ENCODE measurements at regions of chr5 and their contacts with region 1.

Region 1: GRCh38 chr5:150075871-150076288 is 10.5 kb downstream of the CSF1R start:
- DNase-seq: peak in 1 of 2 experiments; percentile 32
- H3K4me3 ChIP-seq: no peak overlapping the region
- H3K27ac ChIP-seq: no peak overlapping the region
- H3K4me1 ChIP-seq: no peaks in the 10 kb centered on the region
- H3K27me3 ChIP-seq: no peaks in the 10 kb centered on the region
- CTCF ChIP-seq: peak; percentile 7 to 33 (median 22); a peak in 3 of 4 replicates
- EP300 ChIP-seq: no peak
- POLR2A ChIP-seq: no peak
- RAD21 ChIP-seq: peak; percentile 14 to 35; a peak in 2 of 4 replicates

Region 2: DNA sequence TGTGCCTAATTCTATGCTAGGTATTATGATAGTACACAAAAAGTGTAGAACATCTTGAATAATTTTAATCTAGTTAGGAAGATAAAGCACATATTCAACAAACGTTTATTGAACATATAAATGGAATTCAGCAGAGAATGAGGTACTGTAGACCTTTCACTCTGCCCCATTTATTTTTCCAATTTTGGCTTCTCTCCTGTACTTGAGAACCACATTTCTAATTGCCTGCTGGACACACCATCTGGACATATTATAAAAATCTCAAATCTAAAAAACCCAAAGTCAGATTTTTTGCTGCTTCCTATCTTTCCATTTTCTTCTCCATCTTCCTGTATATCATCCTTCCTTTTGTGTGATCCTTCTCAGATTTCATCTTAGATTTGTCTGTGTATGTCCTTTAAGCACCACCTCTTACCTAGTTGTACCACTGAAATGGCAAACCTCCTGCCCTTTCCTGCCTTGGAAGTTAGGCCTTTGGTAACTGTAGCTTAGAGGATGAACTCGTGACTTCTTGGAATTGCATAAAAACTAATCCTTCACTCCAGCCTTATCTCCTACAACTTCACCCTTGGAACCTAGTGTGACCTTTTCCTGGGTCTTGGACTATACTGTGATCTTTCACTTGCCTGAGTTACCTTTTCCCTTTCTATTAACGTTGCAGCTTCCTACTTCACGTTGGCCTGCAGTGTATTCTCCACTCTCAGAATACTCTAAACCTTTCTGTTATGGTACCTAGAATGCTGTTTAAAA is 106.5 kb before region 1 on chr5:
- CTCF ChIA-PET with region 1: no interaction called
- POLR2A ChIA-PET with region 1: no interaction called
- DNase-seq: no peak
- H3K4me3 ChIP-seq: no peak overlapping the region
- H3K27ac ChIP-seq: no peak overlapping the region
- H3K4me1 ChIP-seq: no peaks in the 10 kb centered on the region
- H3K27me3 ChIP-seq: no peaks in the 10 kb centered on the region
- CTCF ChIP-seq: no peak
- EP300 ChIP-seq: no peak
- POLR2A ChIP-seq: no peak
- RAD21 ChIP-seq: no peak

Region 3: DNA sequence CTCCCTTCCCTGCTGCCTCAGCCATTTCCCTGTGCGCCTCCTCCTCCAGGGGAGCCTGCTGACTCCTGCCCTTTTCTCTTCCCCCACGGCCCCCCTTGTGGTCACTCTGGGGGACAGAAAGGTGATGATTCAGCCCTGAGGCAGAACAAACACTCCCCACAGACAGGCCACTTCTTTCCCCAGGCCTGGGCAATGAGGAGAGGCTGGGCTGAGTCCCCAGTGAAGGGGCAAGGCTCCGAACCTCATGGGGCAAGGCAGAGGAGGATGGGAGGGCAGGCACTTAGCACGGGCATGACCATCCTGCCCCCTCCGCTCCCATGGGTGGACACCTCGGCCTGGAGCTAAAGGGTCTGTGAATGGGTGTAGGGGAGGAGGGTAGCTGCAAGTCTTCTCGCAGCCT is 10.5 kb before region 1 on chr5:
- CTCF ChIA-PET with region 1: interaction called, 17 read pairs
- POLR2A ChIA-PET with region 1: interaction called, 4 read pairs
- DNase-seq: no peak
- H3K4me3 ChIP-seq: no peak overlapping the region
- H3K27ac ChIP-seq: no peak overlapping the region; the same call in 1 of the 2 replicates
- H3K4me1 ChIP-seq: peaks cover 0 to 18% (median 4%) of the 10 kb centered on the region in 4 experiments; a peak in 5 of 7 replicates
- H3K27me3 ChIP-seq: peaks cover 0 to 2% (median 0%) of the 10 kb centered on the region in 4 experiments; a peak in 2 of 7 replicates
- CTCF ChIP-seq: 0 out of 4 replicates have a peak, but pooled peaks of 1 of the 3 experiments have one; percentile 7
- EP300 ChIP-seq: no peak
- POLR2A ChIP-seq: no peak
- RAD21 ChIP-seq: 0 out of 4 replicates have a peak, but pooled peaks of 1 of the 2 experiments have one; percentile 4

Region 4: GRCh38 chr5:150372639-150373038 is 296.8 kb after region 1 on chr5:
- CTCF ChIA-PET with region 1: no interaction called
- POLR2A ChIA-PET with region 1: no interaction called
- DNase-seq: no peak
- H3K4me3 ChIP-seq: no peak overlapping the region
- H3K27ac ChIP-seq: no peak overlapping the region
- H3K4me1 ChIP-seq: no peaks in the 10 kb centered on the region
- H3K27me3 ChIP-seq: no peaks in the 10 kb centered on the region
- CTCF ChIP-seq: no peak
- EP300 ChIP-seq: no peak
- POLR2A ChIP-seq: no peak
- RAD21 ChIP-seq: no peak

Measured in H1 (cell line).